ENCODE measurements at regions of chr15 and their contacts with region 1.

Region 1: DNA sequence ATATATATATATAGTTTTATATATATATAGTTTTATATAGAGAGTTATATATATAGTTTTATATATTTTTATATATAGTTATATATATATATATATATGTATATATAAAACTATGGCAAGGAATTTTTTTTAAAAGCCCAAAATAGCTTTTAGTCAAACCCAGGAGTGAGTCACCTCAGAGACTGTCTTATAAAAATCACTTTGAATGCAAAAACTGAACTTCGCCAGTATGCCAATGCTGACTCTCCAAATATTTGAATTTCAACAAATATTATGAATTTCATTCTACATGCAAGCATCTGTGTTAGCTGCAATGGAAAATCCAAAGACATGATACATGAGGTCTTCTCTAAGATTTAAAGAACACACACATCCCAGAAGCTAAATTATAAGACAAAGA is 132.8 kb upstream of the NR2F2 start:
- DNase-seq: no peak
- ATAC-seq: no peak
- H3K4me3 ChIP-seq: no peak overlapping the region
- H3K4me3 Mint-ChIP-seq: no peak overlapping the region
- H3K27ac ChIP-seq: no peak overlapping the region
- H3K27ac Mint-ChIP-seq: no peak overlapping the region
- H3K4me1 ChIP-seq: no peaks in the 10 kb centered on the region
- H3K4me1 Mint-ChIP-seq: no peaks in the 10 kb centered on the region
- H3K27me3 ChIP-seq: no peaks in the 10 kb centered on the region
- H3K27me3 Mint-ChIP-seq: peaks cover 23% of the 10 kb centered on the region
- CTCF ChIP-seq: no peak

Region 2: GRCh38 chr15:96070626-96071025 is 127.1 kb before region 1 on chr15:
- CTCF ChIA-PET with region 1: no interaction called
- POLR2A ChIA-PET with region 1: no interaction called
- intact Hi-C with region 1: no loop called
- DNase-seq: no peak
- ATAC-seq: no peak
- H3K4me3 ChIP-seq: no peak overlapping the region
- H3K4me3 Mint-ChIP-seq: no peak overlapping the region
- H3K27ac ChIP-seq: no peak overlapping the region
- H3K27ac Mint-ChIP-seq: no peak overlapping the region
- H3K4me1 ChIP-seq: no peaks in the 10 kb centered on the region
- H3K4me1 Mint-ChIP-seq: no peaks in the 10 kb centered on the region
- H3K27me3 ChIP-seq: no peaks in the 10 kb centered on the region
- H3K27me3 Mint-ChIP-seq: peaks cover 5% of the 10 kb centered on the region
- CTCF ChIP-seq: no peak

Region 3: DNA sequence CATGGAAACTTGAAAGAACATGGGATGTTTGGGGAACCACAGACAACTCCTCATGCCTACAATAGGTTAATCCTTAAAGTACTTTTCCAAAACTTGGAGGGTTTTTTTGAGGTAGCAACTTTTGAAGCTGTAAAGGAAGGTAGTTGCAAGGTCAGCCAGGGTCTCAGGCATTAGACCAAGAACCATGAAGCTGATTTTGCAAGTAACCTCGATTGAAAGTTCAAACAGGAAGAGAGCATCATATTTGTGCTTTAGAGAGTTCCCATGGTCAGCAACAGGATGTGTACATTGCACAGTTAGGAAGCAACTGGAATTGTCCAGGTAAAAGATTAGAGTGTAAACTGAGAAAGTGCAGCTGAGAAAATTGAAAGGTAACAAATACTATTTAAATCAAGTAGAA is 67.0 kb before region 1 on chr15:
- CTCF ChIA-PET with region 1: no interaction called
- POLR2A ChIA-PET with region 1: no interaction called
- intact Hi-C with region 1: loop called in 1 of 2 experiments (anchors 10 kb)
- DNase-seq: no peak
- ATAC-seq: no peak
- H3K4me3 ChIP-seq: no peak overlapping the region
- H3K4me3 Mint-ChIP-seq: no peak overlapping the region
- H3K27ac ChIP-seq: no peak overlapping the region
- H3K27ac Mint-ChIP-seq: no peak overlapping the region
- H3K4me1 ChIP-seq: no peaks in the 10 kb centered on the region
- H3K4me1 Mint-ChIP-seq: no peaks in the 10 kb centered on the region
- H3K27me3 ChIP-seq: no peaks in the 10 kb centered on the region
- H3K27me3 Mint-ChIP-seq: peaks cover 5% of the 10 kb centered on the region
- CTCF ChIP-seq: no peak